Activated B cell treated with CpG ODN at 0.5 μM for 24 hours (primary cell): ENCODE measurements at regions of chr10 and their contacts with region 1.

Region 1: DNA sequence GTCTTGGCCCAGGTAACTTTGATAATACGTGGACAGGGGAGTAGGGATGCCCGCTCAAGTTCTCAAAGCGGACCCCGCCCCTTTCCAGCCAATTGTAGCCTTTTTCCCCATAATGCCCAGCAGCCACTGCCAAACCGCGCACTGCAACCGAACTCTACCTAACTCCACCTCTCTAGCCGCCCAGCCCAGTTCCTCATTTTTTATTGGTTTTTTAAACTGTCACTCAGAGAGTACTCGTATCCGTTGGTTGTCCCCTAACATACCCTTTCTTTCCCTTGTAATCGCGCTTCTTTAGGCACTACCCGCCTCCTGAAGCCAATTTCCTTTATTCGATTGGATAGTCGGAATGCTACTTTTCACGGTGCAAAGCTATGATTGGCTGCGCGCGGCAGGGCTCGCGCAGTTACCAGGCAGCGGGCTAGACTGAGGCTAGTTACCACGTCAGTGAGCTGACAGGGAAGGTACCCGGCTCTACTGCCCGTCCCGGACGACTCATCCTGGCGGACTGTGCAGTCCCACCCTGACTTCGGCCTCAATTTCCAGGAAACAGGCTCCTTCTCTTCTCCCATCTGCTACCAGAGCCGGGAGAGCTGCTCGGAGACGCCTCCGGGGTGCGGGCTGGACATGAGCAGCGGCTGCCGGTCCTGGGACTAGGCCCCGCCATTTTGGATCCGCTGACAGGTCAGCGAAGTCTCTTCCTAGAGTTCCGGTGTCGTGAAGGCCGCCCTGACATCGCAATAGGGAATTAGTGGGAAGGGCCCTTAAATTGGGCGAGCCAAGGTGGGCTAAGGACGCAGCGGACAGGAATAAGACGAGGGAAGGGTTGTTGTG is at the start of gene GBF1:
- DNase-seq: peak; percentile 76
- ATAC-seq: peak; percentile 88
- H3K4me3 Mint-ChIP-seq: peak within 1 kb of the TSS; percentile 98
- H3K27ac Mint-ChIP-seq: peak within 1 kb of the TSS; percentile 91
- H3K4me1 Mint-ChIP-seq: peaks cover 58% of the 10 kb centered on the region
- H3K27me3 Mint-ChIP-seq: peaks cover 22% of the 10 kb centered on the region
- CTCF ChIP-seq: no peak
- total RNA-seq, gene GBF1: 40.8 and 44.3 TPM in 2 replicates

Region 2: GRCh38 chr10:102151774-102152544 is 93.4 kb before region 1 on chr10 and contains the start of gene NOLC1:
- CTCF ChIA-PET with region 1: no interaction called
- POLR2A ChIA-PET with region 1: no interaction called
- intact Hi-C with region 1: loop called (anchors 10 kb)
- DNase-seq: peak; percentile 99
- ATAC-seq: peak; percentile 96
- H3K4me3 Mint-ChIP-seq: peak within 1 kb of the TSS; percentile 97
- H3K27ac Mint-ChIP-seq: peak within 1 kb of the TSS; percentile 93
- H3K4me1 Mint-ChIP-seq: peaks cover 35% of the 10 kb centered on the region
- H3K27me3 Mint-ChIP-seq: no peaks in the 10 kb centered on the region
- CTCF ChIP-seq: no peak
- total RNA-seq, gene NOLC1: 95.1 and 106 TPM in 2 replicates

Region 3: GRCh38 chr10:102231357-102232318 is 13.7 kb before region 1 on chr10:
- CTCF ChIA-PET with region 1: interaction called, 50 read pairs
- POLR2A ChIA-PET with region 1: interaction called, 21 read pairs
- intact Hi-C with region 1: loop called (anchors 1 kb)
- DNase-seq: peak; percentile 68
- ATAC-seq: peak; percentile 65
- H3K4me3 Mint-ChIP-seq: peak overlapping the region; percentile 82
- H3K27ac Mint-ChIP-seq: no peak overlapping the region
- H3K4me1 Mint-ChIP-seq: peaks cover 14% of the 10 kb centered on the region
- H3K27me3 Mint-ChIP-seq: peaks cover 57% of the 10 kb centered on the region
- CTCF ChIP-seq: no peak

Region 4: GRCh38 chr10:102399217-102400089 is 154.1 kb after region 1 on chr10:
- CTCF ChIA-PET with region 1: no interaction called
- POLR2A ChIA-PET with region 1: interaction called, 15 read pairs
- intact Hi-C with region 1: loop called (anchors 1 kb)
- DNase-seq: peak; percentile 87
- ATAC-seq: peak; percentile 37
- H3K4me3 Mint-ChIP-seq: peak overlapping the region; percentile 94
- H3K27ac Mint-ChIP-seq: peak overlapping the region; percentile 97
- H3K4me1 Mint-ChIP-seq: peaks cover 54% of the 10 kb centered on the region
- H3K27me3 Mint-ChIP-seq: no peaks in the 10 kb centered on the region
- CTCF ChIP-seq: peak; percentile 95

Region 5: DNA sequence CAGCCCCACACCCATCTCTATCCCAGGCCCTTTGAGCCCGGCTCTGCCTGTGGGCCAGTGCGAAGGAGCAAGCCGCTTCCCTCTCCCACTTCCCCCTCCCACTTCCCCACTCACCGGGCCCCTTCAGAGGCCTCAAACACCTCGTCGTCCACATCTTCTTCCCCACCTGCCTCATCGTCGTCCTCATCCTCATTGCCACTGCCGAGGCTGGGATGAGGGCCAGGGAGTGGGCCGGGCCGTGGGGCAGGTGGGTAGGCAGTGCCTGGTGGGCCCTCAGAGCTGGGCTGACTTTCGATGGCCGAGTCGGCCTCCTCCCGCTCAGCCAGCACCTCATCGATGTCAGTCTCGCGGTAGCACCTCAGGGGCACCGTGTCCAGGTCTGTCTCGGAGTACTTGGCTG is 169.4 kb after region 1 on chr10:
- CTCF ChIA-PET with region 1: no interaction called
- POLR2A ChIA-PET with region 1: no interaction called
- intact Hi-C with region 1: no loop called
- DNase-seq: no peak
- ATAC-seq: no peak
- H3K4me3 Mint-ChIP-seq: no peak overlapping the region
- H3K27ac Mint-ChIP-seq: no peak overlapping the region
- H3K4me1 Mint-ChIP-seq: peaks cover 38% of the 10 kb centered on the region
- H3K27me3 Mint-ChIP-seq: peaks cover 55% of the 10 kb centered on the region
- CTCF ChIP-seq: no peak

Region 6: GRCh38 chr10:103367782-103368518 is 1122.6 kb after region 1 on chr10 and contains the start of gene TAF5:
- CTCF ChIA-PET with region 1: interaction called, 3 read pairs
- POLR2A ChIA-PET with region 1: no interaction called
- intact Hi-C with region 1: loop called (anchors 5 kb)
- DNase-seq: peak; percentile 79
- ATAC-seq: peak; percentile 72
- H3K4me3 Mint-ChIP-seq: peak within 1 kb of the TSS; percentile 90
- H3K27ac Mint-ChIP-seq: peak within 1 kb of the TSS; percentile 87
- H3K4me1 Mint-ChIP-seq: peaks cover 12% of the 10 kb centered on the region
- H3K27me3 Mint-ChIP-seq: no peaks in the 10 kb centered on the region
- CTCF ChIP-seq: no peak
- total RNA-seq, gene TAF5: 3.6 and 3.8 TPM in 2 replicates